Activated CD4-positive, alpha-beta memory T cell treated with anti-CD3 and anti-CD28 coated beads for 36 hours (primary cell): ENCODE measurements at regions of chr17 and their contacts with region 1.

Region 1: GRCh38 chr17:40113110-40113906 is 8.5 kb upstream of the MSL1 start:
- DNase-seq: peak; percentile 96
- H3K4me3 Mint-ChIP-seq: peak overlapping the region; percentile 80
- H3K27ac Mint-ChIP-seq: peak overlapping the region; percentile 92
- H3K4me1 Mint-ChIP-seq: peaks cover 49% of the 10 kb centered on the region
- H3K27me3 Mint-ChIP-seq: no peaks in the 10 kb centered on the region

Region 2: GRCh38 chr17:40062329-40063186 is 50.8 kb before region 1 on chr17 and contains the start of gene THRA:
- CTCF ChIA-PET with region 1: interaction called, 20 read pairs
- POLR2A ChIA-PET with region 1: no interaction called
- intact Hi-C with region 1: loop called (anchors 1 kb)
- DNase-seq: peak; percentile 72
- H3K4me3 Mint-ChIP-seq: peak within 1 kb of the TSS; percentile 80
- H3K27ac Mint-ChIP-seq: peak within 1 kb of the TSS; percentile 44
- H3K4me1 Mint-ChIP-seq: peaks cover 39% of the 10 kb centered on the region
- H3K27me3 Mint-ChIP-seq: peaks cover 3% of the 10 kb centered on the region
- total RNA-seq, gene THRA: 12.5 to 13.4 TPM

Region 3: DNA sequence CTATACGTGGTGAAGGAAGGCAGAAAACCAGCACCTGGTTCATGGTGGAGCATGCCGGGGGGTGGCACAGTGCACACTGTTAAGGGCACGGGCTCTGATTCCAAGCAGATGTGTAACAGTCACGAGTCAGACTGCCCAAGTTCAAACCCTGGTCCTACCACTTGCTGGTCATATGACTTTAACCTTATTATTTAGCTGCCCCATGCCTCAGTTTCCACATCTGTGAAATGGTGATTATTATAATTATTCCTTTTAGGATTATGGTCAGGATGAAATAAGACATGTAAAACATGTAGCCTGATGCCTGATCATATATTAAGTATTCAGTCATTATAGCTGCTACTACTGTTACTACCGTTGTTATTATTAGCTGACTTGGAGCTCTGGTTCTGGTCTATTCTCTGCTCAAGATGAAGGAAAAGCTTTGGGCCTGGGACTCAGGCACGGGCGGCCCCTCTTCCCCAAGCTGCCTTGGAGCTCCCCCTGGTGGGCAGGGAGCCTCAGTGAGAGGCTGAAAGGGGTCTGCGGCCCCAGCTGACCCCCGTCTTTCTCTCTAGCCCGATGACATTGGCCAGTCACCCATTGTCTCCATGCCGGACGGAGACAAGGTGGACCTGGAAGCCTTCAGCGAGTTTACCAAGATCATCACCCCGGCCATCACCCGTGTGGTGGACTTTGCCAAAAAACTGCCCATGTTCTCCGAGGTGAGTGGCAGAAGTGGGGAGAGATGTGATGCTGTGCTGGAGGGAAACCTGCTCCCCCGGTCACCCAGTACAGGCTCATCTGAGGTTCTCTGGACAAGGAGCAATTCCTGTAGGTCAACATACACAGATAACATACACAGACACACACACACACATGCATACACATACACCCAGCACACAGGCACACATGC is 26.9 kb before region 1 on chr17:
- CTCF ChIA-PET with region 1: interaction called, 17 read pairs
- POLR2A ChIA-PET with region 1: no interaction called
- intact Hi-C with region 1: no loop called
- DNase-seq: peak; percentile 66
- H3K4me3 Mint-ChIP-seq: no peak overlapping the region
- H3K27ac Mint-ChIP-seq: no peak overlapping the region
- H3K4me1 Mint-ChIP-seq: no peaks in the 10 kb centered on the region
- H3K27me3 Mint-ChIP-seq: no peaks in the 10 kb centered on the region

Region 4: DNA sequence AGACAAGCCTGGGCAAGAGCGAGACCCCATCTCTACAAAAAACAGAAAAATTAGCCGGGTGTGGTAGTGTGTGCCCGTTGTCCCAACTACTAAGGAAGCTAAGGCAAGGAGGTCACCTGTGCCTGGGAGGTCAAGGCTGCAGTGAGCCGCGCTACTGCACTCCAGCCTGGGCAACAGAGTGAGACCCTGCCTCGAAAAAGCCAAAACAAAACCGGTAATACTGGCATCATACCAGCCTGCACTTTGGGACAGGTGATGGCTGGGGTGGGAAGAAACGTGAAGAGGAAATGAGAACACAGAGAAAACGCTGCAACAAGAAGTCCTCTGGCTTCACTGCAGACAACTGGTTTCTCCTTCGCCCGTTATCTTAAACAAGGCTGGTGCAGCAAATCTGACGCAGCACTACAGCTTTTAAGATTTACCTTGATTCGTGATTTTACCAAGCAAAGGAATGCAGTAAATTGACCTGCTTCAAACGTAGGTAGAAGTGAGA is 26.3 kb after region 1 on chr17:
- CTCF ChIA-PET with region 1: interaction called, 28 read pairs
- POLR2A ChIA-PET with region 1: interaction called, 22 read pairs
- intact Hi-C with region 1: loop called (anchors 2 kb)
- DNase-seq: no peak
- H3K4me3 Mint-ChIP-seq: peak overlapping the region; percentile 86
- H3K27ac Mint-ChIP-seq: peak overlapping the region; percentile 98
- H3K4me1 Mint-ChIP-seq: peaks cover 28% of the 10 kb centered on the region
- H3K27me3 Mint-ChIP-seq: no peaks in the 10 kb centered on the region

Region 5: GRCh38 chr17:40177275-40177874 is 64.1 kb after region 1 on chr17 and contains the start of gene RAPGEFL1:
- CTCF ChIA-PET with region 1: interaction called, 10 read pairs
- POLR2A ChIA-PET with region 1: no interaction called
- intact Hi-C with region 1: no loop called
- DNase-seq: peak; percentile 93
- H3K4me3 Mint-ChIP-seq: peak within 1 kb of the TSS; percentile 34
- H3K27ac Mint-ChIP-seq: no peak within 1 kb of the TSS
- H3K4me1 Mint-ChIP-seq: peaks cover 7% of the 10 kb centered on the region
- H3K27me3 Mint-ChIP-seq: no peaks in the 10 kb centered on the region
- total RNA-seq, gene RAPGEFL1: 4.9 to 6.1 TPM

Region 6: DNA sequence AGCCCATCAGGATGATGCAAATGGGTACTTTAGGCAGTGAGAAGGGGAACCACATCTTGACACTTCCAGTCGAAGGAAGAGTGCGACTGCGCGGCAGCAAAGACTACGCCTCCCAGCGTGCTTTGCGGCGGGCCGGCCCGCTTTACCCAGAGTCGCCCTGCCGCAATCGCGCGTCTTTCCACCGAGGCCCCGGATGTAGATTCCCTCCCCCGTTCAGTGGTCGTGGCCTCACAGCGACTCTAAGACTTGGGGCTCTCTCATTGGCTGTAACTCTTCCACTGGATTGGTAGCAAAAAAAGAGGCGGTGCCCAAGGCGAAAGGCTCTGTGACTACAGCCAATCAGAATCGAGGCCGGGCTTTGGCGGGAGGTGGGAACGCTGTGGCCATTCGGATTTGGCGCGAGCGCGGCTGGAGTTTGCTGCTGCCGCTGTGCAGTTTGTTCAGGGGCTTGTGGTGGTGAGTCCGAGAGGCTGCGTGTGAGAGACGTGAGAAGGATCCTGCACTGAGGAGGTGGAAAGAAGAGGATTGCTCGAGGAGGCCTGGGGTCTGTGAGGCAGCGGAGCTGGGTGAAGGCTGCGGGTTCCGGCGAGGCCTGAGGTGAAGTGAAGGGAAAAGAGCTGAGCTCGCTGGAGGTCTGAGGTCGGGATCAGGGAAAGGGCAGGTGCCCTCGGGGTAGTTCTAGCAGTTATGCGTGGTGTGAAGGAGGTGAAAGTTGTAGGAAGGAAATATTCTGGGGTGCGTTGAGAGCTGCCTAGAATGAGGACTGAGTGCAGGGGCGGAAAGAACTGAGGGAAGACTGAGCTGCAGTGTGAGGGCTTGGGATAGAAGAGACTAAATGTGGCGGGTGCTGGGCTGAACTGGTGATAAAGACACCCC is 174.4 kb after region 1 on chr17 and contains the start of gene CDC6:
- CTCF ChIA-PET with region 1: interaction called, 7 read pairs
- POLR2A ChIA-PET with region 1: interaction called, 3 read pairs
- intact Hi-C with region 1: loop called (anchors 2 kb)
- DNase-seq: peak; percentile 100
- H3K4me3 Mint-ChIP-seq: peak within 1 kb of the TSS; percentile 99
- H3K27ac Mint-ChIP-seq: peak within 1 kb of the TSS; percentile 94
- H3K4me1 Mint-ChIP-seq: peaks cover 56% of the 10 kb centered on the region
- H3K27me3 Mint-ChIP-seq: no peaks in the 10 kb centered on the region
- total RNA-seq, gene CDC6: 95.6 to 95.7 TPM

Region 7: GRCh38 chr17:40348568-40349422 is 235.5 kb after region 1 on chr17:
- CTCF ChIA-PET with region 1: no interaction called
- POLR2A ChIA-PET with region 1: no interaction called
- intact Hi-C with region 1: no loop called
- DNase-seq: no peak
- H3K4me3 Mint-ChIP-seq: no peak overlapping the region
- H3K27ac Mint-ChIP-seq: peak overlapping the region; percentile 34
- H3K4me1 Mint-ChIP-seq: peaks cover 41% of the 10 kb centered on the region
- H3K27me3 Mint-ChIP-seq: no peaks in the 10 kb centered on the region